Transverse colon (tissue), 4 donors: ENCODE measurements at regions of chr3 and their contacts with region 1.

Region 1: GRCh38 chr3:182258538-182259177 is 534.6 kb upstream of the ATP11B start:
- DNase-seq: no peak
- H3K4me3 ChIP-seq: no peak overlapping the region
- H3K27ac ChIP-seq: no peak overlapping the region
- H3K4me1 ChIP-seq: no peaks in the 10 kb centered on the region
- H3K27me3 ChIP-seq: peaks cover 26% of the 10 kb centered on the region
- CTCF ChIP-seq: peak; percentile 16 to 38 (median 27)
- EP300 ChIP-seq: no peak
- POLR2A ChIP-seq: no peak

Region 2: DNA sequence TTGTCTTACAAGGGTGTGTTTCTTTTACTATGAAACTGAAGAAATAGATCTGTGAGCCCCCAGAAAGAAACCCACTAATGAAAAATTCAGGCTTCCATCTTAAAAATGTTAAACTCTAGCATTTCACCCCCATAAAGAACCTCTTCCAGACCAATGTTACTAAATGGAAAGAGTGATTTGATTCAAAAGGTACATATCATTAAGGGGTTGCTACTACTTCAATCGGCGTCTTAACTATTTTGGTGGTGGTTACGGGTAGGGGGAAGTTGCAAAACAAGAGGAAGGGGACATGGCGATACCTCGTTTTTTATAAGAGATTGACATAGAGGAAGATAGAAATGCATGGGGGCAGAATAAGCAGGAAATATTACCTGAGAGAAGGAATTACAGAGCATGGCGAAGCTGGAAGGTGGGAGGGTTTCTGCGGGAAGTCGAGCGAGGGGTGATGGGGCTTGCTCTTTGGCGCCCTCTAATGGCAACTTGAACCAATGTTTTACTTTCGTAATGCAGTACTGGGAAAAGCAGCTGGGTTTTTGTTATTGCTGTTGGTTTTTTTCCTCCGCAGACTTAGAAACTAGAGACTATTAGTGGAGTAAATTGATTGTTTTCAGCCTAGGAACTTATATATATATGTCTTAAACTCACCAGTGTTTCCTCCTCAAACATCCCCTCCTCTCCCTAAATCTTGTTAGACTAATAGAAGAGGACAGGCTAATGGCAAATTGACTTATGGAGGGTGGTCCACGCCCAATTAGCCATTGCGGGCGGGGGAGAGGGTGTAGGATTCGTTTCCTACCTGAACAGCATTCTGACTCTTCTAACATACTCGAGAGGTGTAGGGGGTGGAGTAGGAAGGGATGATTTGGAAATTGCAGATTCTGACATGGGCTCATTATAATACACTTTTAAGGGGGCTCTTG is 558.2 kb before region 1 on chr3:
- in situ Hi-C with region 1: loop called in 2 of 4 experiments (anchors 25 kb)
- intact Hi-C with region 1: no loop called
- DNase-seq: peak; percentile 64
- H3K4me3 ChIP-seq: peak overlapping the region in 1 of 4 donors; percentile 2
- H3K27ac ChIP-seq: no peak overlapping the region
- H3K4me1 ChIP-seq: peaks cover 9 to 22% (median 17%) of the 10 kb centered on the region in 4 donors
- H3K27me3 ChIP-seq: peaks cover 100% of the 10 kb centered on the region
- CTCF ChIP-seq: peak; percentile 58 to 92 (median 80)
- EP300 ChIP-seq: no peak
- POLR2A ChIP-seq: no peak

Region 3: GRCh38 chr3:183502237-183503181 is 1243.9 kb after region 1 on chr3:
- in situ Hi-C with region 1: no loop called
- intact Hi-C with region 1: loop called (anchors 5 kb)
- DNase-seq: no peak
- H3K4me3 ChIP-seq: no peak overlapping the region
- H3K27ac ChIP-seq: no peak overlapping the region
- H3K4me1 ChIP-seq: no peaks in the 10 kb centered on the region
- H3K27me3 ChIP-seq: no peaks in the 10 kb centered on the region
- CTCF ChIP-seq: no peak
- EP300 ChIP-seq: no peak
- POLR2A ChIP-seq: no peak